ENCODE measurements at regions of chr5 and their contacts with region 1.

Region 1: DNA sequence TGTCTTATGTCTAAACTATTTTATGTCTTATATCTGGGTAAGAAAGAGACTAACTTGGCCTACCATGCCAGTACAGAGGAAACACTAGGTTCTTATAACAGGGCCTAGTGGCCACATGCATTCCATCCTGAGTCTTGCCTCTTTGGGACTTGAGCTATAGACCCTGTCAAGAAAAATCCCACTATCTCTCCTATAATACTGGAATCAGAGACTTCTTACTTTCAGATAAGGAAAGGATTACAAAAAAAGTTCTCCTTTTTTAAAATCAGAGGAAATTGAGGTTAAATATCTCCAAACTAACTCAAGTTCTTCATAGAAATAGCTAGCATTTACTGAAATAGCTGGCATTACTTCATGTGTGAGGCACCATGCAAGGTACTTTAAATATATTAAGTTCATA is 34.3 kb downstream of the PTGER4 start:
- DNase-seq: no peak
- CTCF ChIP-seq: no peak

Region 2: DNA sequence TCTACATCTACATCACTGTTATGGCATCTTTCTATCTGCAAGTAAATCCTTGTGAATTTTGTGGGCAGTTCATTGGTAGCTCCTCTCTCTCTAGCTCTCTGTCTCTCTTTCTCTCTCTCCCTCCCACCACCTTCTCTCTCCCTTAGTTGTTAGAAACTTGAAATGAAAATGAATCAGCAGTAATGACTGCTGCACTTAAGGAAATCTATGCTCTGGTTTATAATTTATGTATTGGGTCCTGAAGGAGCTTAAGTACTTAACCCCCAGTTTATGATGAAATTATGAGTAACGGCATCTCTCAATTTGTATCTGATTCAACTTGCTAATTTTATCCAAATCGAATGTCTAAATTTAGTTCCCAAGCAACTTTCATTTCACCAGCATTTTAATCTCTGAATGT is 86.3 kb before region 1 on chr5:
- CTCF ChIA-PET with region 1: no interaction called
- POLR2A ChIA-PET with region 1: no interaction called
- DNase-seq: no peak
- CTCF ChIP-seq: no peak

Region 3: GRCh38 chr5:40736103-40736875 is 22.3 kb after region 1 on chr5:
- CTCF ChIA-PET with region 1: interaction called, 14 read pairs
- POLR2A ChIA-PET with region 1: no interaction called
- DNase-seq: peak; percentile 32
- CTCF ChIP-seq: peak; percentile 59